Right cardiac atrium (tissue), 5 donors: ENCODE measurements at regions of chr9 and their contacts with region 1.

Region 1: DNA sequence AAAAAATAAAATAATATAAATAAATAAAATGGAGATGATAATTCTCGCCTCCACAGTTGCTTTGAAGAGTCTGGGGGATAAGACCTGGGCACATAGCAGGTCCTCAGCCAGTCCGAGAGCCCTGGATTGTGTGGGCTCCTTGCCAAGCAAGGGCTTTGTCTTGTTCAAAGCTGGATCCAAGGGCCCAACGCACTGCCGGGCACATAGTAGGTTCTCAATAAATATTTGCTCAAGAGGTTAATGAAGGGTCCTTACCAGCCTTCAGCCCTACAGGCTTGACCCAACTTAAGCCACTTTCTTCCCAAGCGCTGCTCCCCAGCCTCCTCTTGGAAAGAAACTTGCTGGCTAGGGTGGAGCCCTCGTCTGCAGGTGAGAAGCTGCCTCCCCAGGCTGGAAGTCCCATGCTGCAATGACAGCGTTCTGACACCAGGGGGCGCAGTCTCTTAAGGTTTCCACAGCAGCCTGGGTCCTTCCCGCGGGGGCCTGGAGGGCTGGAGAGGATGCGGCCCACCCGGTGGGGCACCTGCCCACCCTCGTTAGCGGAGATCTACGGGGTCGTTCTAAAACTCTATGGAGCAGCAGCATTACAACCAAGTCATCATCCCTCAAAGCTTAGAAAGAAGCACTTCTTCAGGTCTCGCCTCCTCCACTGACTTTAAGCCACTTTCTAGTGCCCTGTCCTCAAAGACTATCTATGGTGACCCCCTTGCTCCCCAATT is 115.2 kb downstream of the LHX2 start:
- DNase-seq: peak; percentile 74 to 87 (median 82)
- ATAC-seq: peak; percentile 62 to 66
- H3K4me3 ChIP-seq: no peak overlapping the region
- H3K27ac ChIP-seq: no peak overlapping the region
- H3K4me1 ChIP-seq: no peaks in the 10 kb centered on the region
- H3K27me3 ChIP-seq: no peaks in the 10 kb centered on the region

Region 2: DNA sequence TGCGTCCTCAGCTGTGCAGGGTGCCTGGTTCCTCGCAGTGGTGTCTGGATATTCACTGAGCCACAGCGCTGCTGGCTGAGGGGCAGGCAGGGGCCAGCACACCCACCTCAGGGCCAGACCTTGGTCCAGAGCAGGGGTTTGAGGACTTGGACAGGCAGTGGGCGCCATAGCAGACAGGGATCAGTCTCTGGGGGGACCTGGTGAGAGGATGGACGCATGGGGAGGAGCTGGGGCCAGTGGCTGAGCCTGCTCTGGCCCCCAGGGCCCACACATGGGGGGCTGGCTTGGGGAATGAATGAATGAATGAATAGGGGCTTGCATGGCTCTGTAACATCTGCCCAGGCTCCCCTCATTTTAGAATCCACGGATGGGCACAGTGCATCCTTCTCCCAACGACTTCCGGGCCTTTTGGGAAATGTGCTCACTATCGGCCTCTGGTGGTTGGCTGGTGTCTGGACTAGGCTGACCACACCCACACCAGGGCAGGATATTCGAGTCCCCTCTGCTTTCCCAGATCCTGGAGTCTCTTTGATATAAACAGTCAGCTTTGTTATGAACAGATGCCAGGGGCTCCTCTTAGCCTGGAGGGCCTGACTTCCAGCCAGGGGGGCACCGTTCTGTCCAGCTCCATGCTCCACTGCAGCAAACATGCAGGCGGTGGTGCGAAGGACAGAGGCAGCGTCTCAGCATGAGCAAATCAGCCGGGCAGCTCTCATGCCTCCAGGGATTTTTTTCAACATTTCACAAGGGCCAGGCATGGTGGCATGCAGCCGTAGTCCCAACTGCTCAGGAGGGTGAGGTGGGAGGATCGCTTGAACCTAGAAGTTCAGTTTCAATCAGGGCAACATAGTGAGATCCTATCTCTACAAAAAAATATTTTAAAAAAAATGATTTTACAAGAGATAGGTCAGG is 193.6 kb after region 1 on chr9:
- intact Hi-C with region 1: loop called (anchors 2 to 5 kb)
- DNase-seq: peak; percentile 76 to 89 (median 84)
- ATAC-seq: peak; percentile 82 to 88
- H3K4me3 ChIP-seq: no peak overlapping the region
- H3K27ac ChIP-seq: no peak overlapping the region
- H3K4me1 ChIP-seq: no peaks in the 10 kb centered on the region
- H3K27me3 ChIP-seq: no peaks in the 10 kb centered on the region

Region 3: GRCh38 chr9:124532897-124533296 is 406.2 kb after region 1 on chr9:
- intact Hi-C with region 1: loop called in 3 of 4 experiments (anchors 5 to 10 kb)
- DNase-seq: no peak
- ATAC-seq: no peak
- H3K4me3 ChIP-seq: no peak overlapping the region
- H3K27ac ChIP-seq: no peak overlapping the region
- H3K4me1 ChIP-seq: no peaks in the 10 kb centered on the region
- H3K27me3 ChIP-seq: no peaks in the 10 kb centered on the region

Region 4: DNA sequence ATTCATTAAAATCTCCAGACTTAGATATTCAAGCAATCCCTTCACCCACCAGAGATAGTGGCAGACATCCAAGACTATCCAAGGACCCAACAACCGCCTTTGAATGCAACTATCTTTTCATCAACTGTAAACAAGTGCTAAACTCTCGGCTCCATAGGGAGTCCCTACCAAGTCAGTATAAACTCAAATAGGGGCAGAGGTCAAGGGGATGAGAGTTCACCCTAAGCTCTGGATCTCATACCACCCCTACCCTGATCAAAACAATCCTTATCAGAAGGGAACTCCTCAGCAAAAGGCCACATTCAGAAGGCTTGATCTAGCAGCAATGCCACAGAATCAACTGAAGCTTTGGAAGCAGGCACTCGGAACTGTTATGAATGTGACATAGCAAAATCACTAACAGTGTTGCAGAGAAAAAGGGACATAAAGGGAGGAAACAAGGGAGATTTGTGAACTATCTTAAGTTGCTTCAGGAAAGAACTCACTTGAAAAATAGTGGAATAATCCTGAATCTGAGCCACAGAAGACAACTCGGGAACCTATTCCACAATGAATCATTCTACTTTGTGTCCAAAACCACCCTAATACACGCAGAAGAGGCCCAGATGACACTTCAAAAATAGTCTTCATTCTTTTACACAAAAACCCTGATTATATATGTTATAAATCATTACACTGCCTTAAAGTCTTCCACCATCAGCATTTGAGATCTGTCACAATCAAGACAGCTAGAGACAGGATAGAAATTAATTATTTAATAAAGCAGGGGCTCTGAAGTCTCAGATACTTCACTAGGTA is 594.6 kb after region 1 on chr9:
- intact Hi-C with region 1: no loop called
- DNase-seq: no peak
- ATAC-seq: no peak
- H3K4me3 ChIP-seq: no peak overlapping the region
- H3K27ac ChIP-seq: peak overlapping the region; percentile 37
- H3K4me1 ChIP-seq: peaks cover 7% of the 10 kb centered on the region
- H3K27me3 ChIP-seq: no peaks in the 10 kb centered on the region